CD14-positive monocyte (primary cell): ENCODE measurements at regions of chr19 and their contacts with region 1.

Region 1: DNA sequence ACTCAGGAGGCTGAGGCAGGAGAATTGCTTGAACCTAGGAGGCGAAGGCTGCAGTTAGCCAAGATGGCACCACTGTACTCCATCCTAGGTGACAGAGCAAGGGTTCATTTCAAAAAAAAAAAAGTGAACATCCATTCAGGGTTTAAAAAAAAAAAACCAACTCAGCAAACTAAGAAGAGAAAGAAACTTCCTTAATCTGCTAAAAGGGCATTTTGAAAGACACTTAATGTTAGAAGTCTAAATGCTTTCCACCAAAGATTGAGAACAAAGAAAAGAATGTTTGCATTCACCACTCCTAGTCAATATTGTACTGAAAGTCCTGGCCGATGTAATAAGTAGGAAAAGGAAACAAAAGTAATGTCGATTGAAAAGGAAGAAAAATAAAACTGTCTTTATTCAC is 7.1 kb upstream of the PSMC4 start:
- DNase-seq: no peak
- H3K4me3 ChIP-seq: no peak overlapping the region
- H3K4me3 Mint-ChIP-seq: peak overlapping the region in 1 of 2 donors; percentile 56
- H3K27ac ChIP-seq: no peak overlapping the region
- H3K27ac Mint-ChIP-seq: no peak overlapping the region
- H3K4me1 ChIP-seq: peaks cover 25 to 29% of the 10 kb centered on the region in 2 donors
- H3K4me1 Mint-ChIP-seq: peaks cover 24% of the 10 kb centered on the region
- H3K27me3 ChIP-seq: peaks cover 39 to 79% of the 10 kb centered on the region in 2 donors
- H3K27me3 Mint-ChIP-seq: peaks cover 84 to 98% (median 87%) of the 10 kb centered on the region in 3 donors
- CTCF ChIP-seq: no peak

Region 2: GRCh38 chr19:39927524-39928356 is 36.2 kb before region 1 on chr19:
- intact Hi-C with region 1: loop called (anchors 5 kb)
- DNase-seq: no peak
- H3K4me3 ChIP-seq: no peak overlapping the region
- H3K4me3 Mint-ChIP-seq: peak overlapping the region in 1 of 2 donors; percentile 76
- H3K27ac ChIP-seq: no peak overlapping the region
- H3K27ac Mint-ChIP-seq: no peak overlapping the region
- H3K4me1 ChIP-seq: peaks cover 3 to 8% of the 10 kb centered on the region in 2 donors
- H3K4me1 Mint-ChIP-seq: peaks cover 5% of the 10 kb centered on the region
- H3K27me3 ChIP-seq: peaks cover 22 to 69% of the 10 kb centered on the region in 2 donors
- H3K27me3 Mint-ChIP-seq: peaks cover 70 to 97% (median 84%) of the 10 kb centered on the region in 3 donors
- CTCF ChIP-seq: no peak

Region 3: GRCh38 chr19:39996811-39997594 is 33.1 kb after region 1 on chr19 and contains the start of gene ZNF546:
- intact Hi-C with region 1: no loop called
- DNase-seq: peak; percentile 79 to 86 (median 84)
- H3K4me3 ChIP-seq: peak within 1 kb of the TSS; percentile 64 to 82 (median 74)
- H3K4me3 Mint-ChIP-seq: peak within 1 kb of the TSS; percentile 90 to 97
- H3K27ac ChIP-seq: peak within 1 kb of the TSS; percentile 65 to 88
- H3K27ac Mint-ChIP-seq: peak within 1 kb of the TSS; percentile 82 to 96 (median 89)
- H3K4me1 ChIP-seq: peaks cover 13 to 20% of the 10 kb centered on the region in 2 donors
- H3K4me1 Mint-ChIP-seq: peaks cover 22% of the 10 kb centered on the region
- H3K27me3 ChIP-seq: no peaks in the 10 kb centered on the region
- H3K27me3 Mint-ChIP-seq: peaks cover 0 to 3% (median 2%) of the 10 kb centered on the region in 3 donors
- CTCF ChIP-seq: no peak
- polyA plus RNA-seq, gene ZNF546: 1.3 to 2.3 (median 1.4) TPM